Heart right ventricle (tissue), 16 donors: ENCODE measurements at regions of chr4 and their contacts with region 1.

Region 1: GRCh38 chr4:37686373-37687193 is at the start of gene RELL1:
- DNase-seq: peak; percentile 99 to 100
- ATAC-seq: peak; percentile 95 to 99 (median 97)
- H3K4me3 ChIP-seq: peak within 1 kb of the TSS; percentile 64 to 99 (median 93)
- H3K27ac ChIP-seq: peak within 1 kb of the TSS; percentile 78 to 99 (median 98)
- H3K4me1 ChIP-seq: peaks cover 0 to 45% (median 27%) of the 10 kb centered on the region in 9 donors
- H3K27me3 ChIP-seq: no peaks in the 10 kb centered on the region
- CTCF ChIP-seq: no peak
- total RNA-seq, gene RELL1: 18.1 to 39.9 (median 27.6) TPM

Region 2: DNA sequence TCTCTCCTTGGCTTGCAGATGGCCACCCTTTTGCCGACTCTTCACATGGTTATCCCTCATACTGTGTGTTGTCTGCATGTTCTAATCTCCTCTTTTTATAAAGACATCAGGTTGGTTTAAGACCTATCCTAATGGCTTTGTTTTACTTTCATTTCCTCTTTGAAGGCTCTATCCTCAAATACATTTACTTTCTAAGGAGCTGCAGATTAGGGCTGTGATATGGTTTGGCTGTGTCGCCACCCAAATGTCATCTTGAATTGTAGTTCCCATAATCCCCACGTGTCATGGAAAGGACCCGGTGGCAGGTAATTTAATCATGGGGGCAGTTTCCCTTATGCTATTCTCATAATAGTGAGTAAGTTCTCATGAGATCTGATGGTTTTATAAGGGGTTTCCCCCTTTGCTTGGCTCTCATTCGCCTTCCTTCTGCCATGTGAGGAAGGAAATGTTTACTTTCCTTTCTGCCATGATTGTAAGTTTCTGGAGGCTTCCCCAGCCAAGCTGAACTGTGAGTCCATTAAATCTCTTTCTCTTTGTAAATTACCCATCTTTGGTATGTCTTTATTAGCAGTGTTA is 204.9 kb before region 1 on chr4:
- intact Hi-C with region 1: no loop called
- DNase-seq: no peak
- ATAC-seq: no peak
- H3K4me3 ChIP-seq: no peak overlapping the region
- H3K27ac ChIP-seq: no peak overlapping the region
- H3K4me1 ChIP-seq: peaks cover 0 to 6% (median 0%) of the 10 kb centered on the region in 9 donors
- H3K27me3 ChIP-seq: no peaks in the 10 kb centered on the region
- CTCF ChIP-seq: no peak

Region 3: DNA sequence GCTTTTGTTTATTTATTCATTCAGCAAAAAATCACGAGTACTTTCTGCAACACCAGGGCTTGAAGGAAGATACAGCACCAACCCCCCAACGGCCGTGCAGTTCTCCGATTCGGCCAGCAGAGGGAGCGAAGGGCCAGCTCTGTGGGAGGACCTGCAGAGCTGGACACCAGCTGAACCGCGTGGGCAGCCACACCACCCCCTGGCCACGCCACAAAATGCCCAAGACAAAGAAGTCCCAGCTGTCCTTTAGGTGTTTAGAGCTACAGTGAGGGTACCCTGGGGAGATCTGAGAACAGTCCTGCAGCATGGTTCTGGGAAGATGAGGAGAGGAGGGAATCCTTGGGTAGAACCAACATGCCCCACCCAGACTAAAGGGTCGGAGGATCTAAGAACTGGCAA is 83.5 kb before region 1 on chr4:
- intact Hi-C with region 1: loop called in 7 of 10 experiments (anchors 1 to 10 kb)
- DNase-seq: peak; percentile 82 to 87
- ATAC-seq: peak; percentile 93 to 96 (median 95)
- H3K4me3 ChIP-seq: no peak overlapping the region
- H3K27ac ChIP-seq: no peak overlapping the region
- H3K4me1 ChIP-seq: peaks cover 0 to 20% (median 0%) of the 10 kb centered on the region in 9 donors
- H3K27me3 ChIP-seq: no peaks in the 10 kb centered on the region
- CTCF ChIP-seq: peak; percentile 93 to 99 (median 95)

Region 4: GRCh38 chr4:37628977-37629609 is 57.5 kb before region 1 on chr4:
- intact Hi-C with region 1: loop called in 2 of 10 experiments (anchors 5 to 10 kb)
- DNase-seq: no peak
- ATAC-seq: peak in 5 of 8 donors; percentile 37 to 83 (median 43)
- H3K4me3 ChIP-seq: no peak overlapping the region
- H3K27ac ChIP-seq: peak overlapping the region in 1 of 10 donors; percentile 29
- H3K4me1 ChIP-seq: peaks cover 0 to 30% (median 6%) of the 10 kb centered on the region in 9 donors
- H3K27me3 ChIP-seq: no peaks in the 10 kb centered on the region
- CTCF ChIP-seq: no peak

Region 5: GRCh38 chr4:37666625-37667071 is 19.9 kb before region 1 on chr4:
- intact Hi-C with region 1: loop called in 1 of 10 experiments (anchors 2 kb)
- DNase-seq: peak in 1 of 2 donors; percentile 64
- ATAC-seq: peak; percentile 22 to 89 (median 68)
- H3K4me3 ChIP-seq: no peak overlapping the region
- H3K27ac ChIP-seq: peak overlapping the region; percentile 44 to 92 (median 74)
- H3K4me1 ChIP-seq: peaks cover 24 to 80% (median 64%) of the 10 kb centered on the region in 9 donors
- H3K27me3 ChIP-seq: no peaks in the 10 kb centered on the region
- CTCF ChIP-seq: peak in 3 of 9 donors; percentile 16 to 27 (median 17)

Region 6: GRCh38 chr4:37977471-37978247 is 291.1 kb after region 1 on chr4:
- intact Hi-C with region 1: loop called in 2 of 10 experiments (anchors 10 kb)
- DNase-seq: peak; percentile 79 to 80
- ATAC-seq: peak; percentile 80 to 90 (median 84)
- H3K4me3 ChIP-seq: peak overlapping the region; percentile 53 to 98 (median 92)
- H3K27ac ChIP-seq: peak overlapping the region; percentile 86 to 99 (median 98)
- H3K4me1 ChIP-seq: peaks cover 5 to 62% (median 42%) of the 10 kb centered on the region in 9 donors
- H3K27me3 ChIP-seq: no peaks in the 10 kb centered on the region
- CTCF ChIP-seq: peak; percentile 48 to 91 (median 76)